ENCODE measurements at regions of chr5 and their contacts with region 1.

Region 1: DNA sequence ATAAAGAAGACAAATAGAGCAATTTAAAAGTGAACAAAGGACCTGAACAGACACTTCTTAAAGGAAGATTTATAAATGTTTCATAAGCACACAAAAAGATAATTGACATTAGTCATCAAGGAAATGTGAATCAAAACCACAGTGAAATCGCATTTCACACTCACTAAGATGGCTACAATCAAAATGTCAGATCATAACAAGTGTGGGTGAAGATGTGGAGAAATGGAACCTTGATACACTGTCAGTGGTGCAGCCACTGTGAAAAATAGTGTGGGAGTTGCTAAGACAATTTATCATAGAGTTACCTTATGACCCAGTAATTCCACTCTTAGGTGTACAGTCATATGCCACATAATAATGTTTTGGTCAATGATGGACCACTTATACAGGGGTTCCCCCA is 54.5 kb upstream of the HTR4 start:
- DNase-seq: no peak
- H3K4me3 Mint-ChIP-seq: no peak overlapping the region
- H3K27ac Mint-ChIP-seq: no peak overlapping the region
- H3K4me1 Mint-ChIP-seq: peaks cover 19% of the 10 kb centered on the region
- H3K27me3 Mint-ChIP-seq: peaks cover 5% of the 10 kb centered on the region

Region 2: GRCh38 chr5:148186248-148186996 is 522.4 kb before region 1 on chr5:
- intact Hi-C with region 1: loop called (anchors 1 kb)
- DNase-seq: peak; percentile 61
- H3K4me3 Mint-ChIP-seq: no peak overlapping the region
- H3K27ac Mint-ChIP-seq: no peak overlapping the region
- H3K4me1 Mint-ChIP-seq: peaks cover 6% of the 10 kb centered on the region
- H3K27me3 Mint-ChIP-seq: peaks cover 8% of the 10 kb centered on the region

Region 3: DNA sequence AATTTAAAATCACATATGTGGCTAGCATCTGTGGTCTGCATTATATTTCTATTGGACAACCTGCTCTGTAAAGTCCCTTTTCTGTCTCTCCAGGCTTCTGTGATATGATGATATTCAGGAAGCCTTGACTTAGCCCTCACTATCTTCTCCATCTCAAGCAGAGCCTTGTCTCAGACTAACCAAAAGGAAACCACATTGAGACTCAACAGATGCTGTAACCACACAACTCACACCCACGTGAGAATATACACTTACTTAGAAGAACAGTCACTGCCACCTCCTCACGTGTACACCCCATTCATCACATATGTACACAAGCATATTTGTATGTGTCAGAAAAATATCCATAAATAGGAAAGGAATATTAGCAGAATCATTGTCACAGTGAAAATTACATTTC is 88.2 kb before region 1 on chr5:
- intact Hi-C with region 1: loop called (anchors 2 kb)
- DNase-seq: peak; percentile 81
- H3K4me3 Mint-ChIP-seq: peak overlapping the region; percentile 10
- H3K27ac Mint-ChIP-seq: peak overlapping the region; percentile 55
- H3K4me1 Mint-ChIP-seq: peaks cover 25% of the 10 kb centered on the region
- H3K27me3 Mint-ChIP-seq: peaks cover 36% of the 10 kb centered on the region